ENCODE measurements at regions of chr14 and their contacts with region 1.

Region 1: GRCh38 chr14:58637391-58638230 is at the start of gene DACT1:
- DNase-seq: no peak
- H3K4me3 Mint-ChIP-seq: no peak within 1 kb of the TSS
- H3K27ac Mint-ChIP-seq: no peak within 1 kb of the TSS
- H3K4me1 Mint-ChIP-seq: no peaks in the 10 kb centered on the region
- H3K27me3 Mint-ChIP-seq: peaks cover 66% of the 10 kb centered on the region
- CTCF ChIP-seq: no peak
- total RNA-seq, gene DACT1: not detected in 2 replicates

Region 2: DNA sequence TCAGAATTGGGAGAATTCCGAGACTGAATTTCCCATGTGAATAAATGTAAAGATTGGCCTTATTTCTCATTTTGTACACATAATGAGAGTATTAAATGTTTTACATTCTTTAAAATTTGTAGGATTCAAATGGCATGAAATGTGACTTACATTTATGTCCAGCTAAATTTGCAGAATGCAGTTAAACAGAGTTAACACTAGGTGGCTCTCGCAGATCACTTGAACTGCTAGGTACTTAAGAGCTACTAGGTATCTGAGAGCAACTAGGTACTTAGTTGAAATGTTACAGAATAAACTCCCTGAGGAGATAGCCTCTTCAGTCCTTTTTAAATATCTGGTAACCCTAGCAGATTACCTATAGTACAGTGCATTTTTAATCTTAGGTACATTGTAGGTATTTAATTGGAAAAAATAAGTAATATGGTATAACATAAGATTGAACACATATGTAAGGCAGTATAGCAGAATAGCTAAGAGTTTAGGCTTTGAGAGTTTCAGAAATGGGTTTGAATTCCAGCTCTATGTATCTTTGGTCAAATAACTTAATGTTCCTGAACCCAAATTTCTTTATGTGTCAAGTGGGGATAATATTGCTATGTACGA is 136.3 kb before region 1 on chr14:
- CTCF ChIA-PET with region 1: interaction called, 15 read pairs
- POLR2A ChIA-PET with region 1: no interaction called
- intact Hi-C with region 1: loop called (anchors 1 kb)
- DNase-seq: peak; percentile 50
- H3K4me3 Mint-ChIP-seq: no peak overlapping the region
- H3K27ac Mint-ChIP-seq: no peak overlapping the region
- H3K4me1 Mint-ChIP-seq: no peaks in the 10 kb centered on the region
- H3K27me3 Mint-ChIP-seq: no peaks in the 10 kb centered on the region
- CTCF ChIP-seq: peak; percentile 58

Region 3: GRCh38 chr14:58574623-58575022 is 63.0 kb before region 1 on chr14:
- CTCF ChIA-PET with region 1: no interaction called
- POLR2A ChIA-PET with region 1: no interaction called
- intact Hi-C with region 1: no loop called
- DNase-seq: no peak
- H3K4me3 Mint-ChIP-seq: no peak overlapping the region
- H3K27ac Mint-ChIP-seq: no peak overlapping the region
- H3K4me1 Mint-ChIP-seq: no peaks in the 10 kb centered on the region
- H3K27me3 Mint-ChIP-seq: peaks cover 25% of the 10 kb centered on the region
- CTCF ChIP-seq: no peak

Region 4: GRCh38 chr14:58812050-58812910 is 174.7 kb after region 1 on chr14:
- CTCF ChIA-PET with region 1: no interaction called
- POLR2A ChIA-PET with region 1: no interaction called
- intact Hi-C with region 1: loop called (anchors 10 kb)
- DNase-seq: no peak
- H3K4me3 Mint-ChIP-seq: no peak overlapping the region
- H3K27ac Mint-ChIP-seq: no peak overlapping the region
- H3K4me1 Mint-ChIP-seq: no peaks in the 10 kb centered on the region
- H3K27me3 Mint-ChIP-seq: peaks cover 82% of the 10 kb centered on the region
- CTCF ChIP-seq: no peak

Region 5: DNA sequence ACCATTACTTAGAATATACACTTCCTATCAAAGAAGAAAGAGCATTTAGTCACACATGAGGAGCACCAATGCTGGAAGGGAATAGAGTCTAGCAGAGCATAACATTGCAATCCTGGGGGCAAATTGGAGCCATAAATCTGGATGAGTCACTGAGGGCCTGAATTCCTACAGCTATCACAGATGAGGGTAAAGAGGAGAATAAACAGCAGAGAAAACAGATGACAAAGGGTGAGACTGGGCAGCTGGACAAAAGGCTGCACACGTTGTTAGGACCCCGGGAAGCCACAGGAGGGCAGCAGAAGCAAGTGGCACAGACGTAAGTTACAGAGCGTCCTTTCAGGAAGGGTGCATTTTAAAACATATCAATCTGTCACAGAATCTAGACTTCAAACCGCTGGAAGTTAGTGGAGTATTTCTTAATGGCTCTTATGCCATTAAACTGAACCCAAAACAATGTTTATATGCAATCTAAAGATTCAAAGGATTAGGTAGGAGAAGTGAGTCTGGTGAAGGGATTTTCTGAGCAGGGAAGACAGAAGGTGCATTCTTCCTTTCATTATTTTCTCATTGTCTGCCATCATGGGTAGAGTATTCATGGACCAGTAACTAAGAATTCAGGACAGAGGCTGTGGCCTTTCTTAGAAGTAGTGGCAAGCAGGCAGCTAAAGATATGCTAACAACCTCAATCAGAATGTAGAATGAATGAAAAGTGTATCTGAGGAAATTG is 391.0 kb after region 1 on chr14:
- CTCF ChIA-PET with region 1: interaction called, 5 read pairs
- POLR2A ChIA-PET with region 1: no interaction called
- intact Hi-C with region 1: loop called (anchors 2 kb)
- DNase-seq: peak; percentile 78
- H3K4me3 Mint-ChIP-seq: peak overlapping the region; percentile 35
- H3K27ac Mint-ChIP-seq: no peak overlapping the region
- H3K4me1 Mint-ChIP-seq: peaks cover 8% of the 10 kb centered on the region
- H3K27me3 Mint-ChIP-seq: peaks cover 41% of the 10 kb centered on the region
- CTCF ChIP-seq: peak; percentile 78

Region 6: GRCh38 chr14:59438195-59438647 is 800.6 kb after region 1 on chr14:
- CTCF ChIA-PET with region 1: interaction called, 3 read pairs
- POLR2A ChIA-PET with region 1: no interaction called
- intact Hi-C with region 1: loop called (anchors 5 kb)
- DNase-seq: peak; percentile 76
- H3K4me3 Mint-ChIP-seq: no peak overlapping the region
- H3K27ac Mint-ChIP-seq: peak overlapping the region; percentile 57
- H3K4me1 Mint-ChIP-seq: peaks cover 15% of the 10 kb centered on the region
- H3K27me3 Mint-ChIP-seq: no peaks in the 10 kb centered on the region
- CTCF ChIP-seq: no peak